ENCODE measurements at regions of chr2 and their contacts with region 1.

Region 1: GRCh38 chr2:12227941-12228608 is 481.6 kb downstream of the LPIN1 start:
- DNase-seq: no peak

Region 2: DNA sequence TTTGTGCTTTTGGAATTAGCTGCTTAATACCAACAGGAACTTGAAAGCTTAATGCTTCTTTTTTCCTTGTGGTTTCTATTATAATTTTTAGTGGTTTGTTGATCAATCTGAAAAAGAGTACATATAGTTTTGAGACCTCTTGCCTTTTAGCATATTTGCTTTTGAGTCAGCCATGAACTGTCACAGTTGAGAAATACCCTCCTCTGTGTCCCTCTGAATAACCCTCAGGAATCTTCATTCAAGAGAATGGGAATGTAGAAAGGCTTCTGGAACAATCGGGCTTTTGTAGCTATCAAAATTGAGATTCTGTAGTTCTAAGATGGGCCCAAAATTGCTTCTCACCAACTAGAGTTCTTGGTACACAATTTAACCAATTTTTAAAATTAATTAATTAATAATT is 37.6 kb after region 1 on chr2:
- intact Hi-C with region 1: loop called (anchors 5 kb)
- DNase-seq: no peak

Region 3: GRCh38 chr2:12515871-12516270 is 287.8 kb after region 1 on chr2:
- intact Hi-C with region 1: no loop called
- DNase-seq: no peak

Measured in cardiac septum (tissue), 1 donor.